ENCODE measurements at regions of chr15 and their contacts with region 1.

Region 1: DNA sequence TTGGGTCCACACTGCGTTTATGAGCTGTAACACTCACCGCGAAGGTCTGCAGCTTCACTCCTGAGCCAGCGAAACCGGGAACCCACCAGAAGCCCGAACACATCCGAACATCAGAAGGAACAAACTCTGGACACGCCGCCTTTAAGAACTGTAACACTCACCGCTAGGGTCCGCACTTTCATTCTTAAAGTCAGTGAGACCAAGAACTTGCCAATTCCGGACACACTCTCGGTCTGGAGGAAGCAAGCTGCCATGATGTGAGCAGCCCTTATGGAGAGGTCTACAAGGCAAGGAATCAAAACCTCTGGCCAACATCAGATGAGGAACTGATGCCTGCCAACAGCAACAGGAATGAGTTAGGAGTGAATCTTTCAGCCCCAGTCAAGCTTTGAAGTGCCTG is 62.9 kb downstream of the SLC28A2 start:
- DNase-seq: no peak
- ATAC-seq: peak in 1 of 2 donors; percentile 36

Region 2: DNA sequence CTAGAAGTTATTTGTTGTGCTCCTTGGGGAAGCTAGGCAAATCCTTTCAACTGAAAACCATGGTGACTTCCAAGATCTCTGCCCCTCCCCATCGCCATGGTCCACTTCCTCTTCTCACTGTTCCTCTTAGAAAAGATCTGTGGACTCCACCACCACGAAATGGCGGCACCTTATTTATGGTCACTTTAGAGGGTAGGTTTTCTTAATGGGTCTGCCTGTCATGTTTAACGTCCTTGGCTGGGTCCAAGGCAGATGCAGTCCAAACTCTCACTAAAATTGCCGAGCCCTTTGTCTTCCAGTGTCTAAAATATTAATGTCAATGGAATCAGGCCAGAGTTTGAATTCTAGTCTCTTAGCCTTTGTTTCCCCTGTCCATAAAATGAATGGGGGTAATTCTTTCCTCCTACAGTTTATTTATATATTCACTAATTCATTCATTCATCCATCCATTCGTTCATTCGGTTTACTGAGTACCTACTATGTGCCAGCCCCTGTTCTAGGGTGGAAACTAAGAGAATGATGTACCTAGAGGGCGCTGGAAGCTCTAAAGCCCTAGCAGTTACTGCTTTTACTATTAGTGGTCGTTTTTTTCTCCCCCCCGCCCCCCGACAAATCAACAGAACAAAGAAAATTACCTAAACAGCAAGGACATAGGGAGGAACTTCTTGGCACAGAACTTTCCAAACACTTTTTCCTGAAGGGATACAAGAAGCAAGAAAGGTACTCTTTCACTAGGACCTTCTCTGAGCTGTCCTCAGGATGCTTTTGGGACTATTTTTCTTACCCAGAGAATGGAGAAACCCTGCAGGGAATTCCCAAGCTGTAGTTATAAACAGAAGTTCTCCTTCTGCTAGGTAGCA is 604.5 kb before region 1 on chr15:
- intact Hi-C with region 1: no loop called
- DNase-seq: peak; percentile 47
- ATAC-seq: no peak

Region 3: DNA sequence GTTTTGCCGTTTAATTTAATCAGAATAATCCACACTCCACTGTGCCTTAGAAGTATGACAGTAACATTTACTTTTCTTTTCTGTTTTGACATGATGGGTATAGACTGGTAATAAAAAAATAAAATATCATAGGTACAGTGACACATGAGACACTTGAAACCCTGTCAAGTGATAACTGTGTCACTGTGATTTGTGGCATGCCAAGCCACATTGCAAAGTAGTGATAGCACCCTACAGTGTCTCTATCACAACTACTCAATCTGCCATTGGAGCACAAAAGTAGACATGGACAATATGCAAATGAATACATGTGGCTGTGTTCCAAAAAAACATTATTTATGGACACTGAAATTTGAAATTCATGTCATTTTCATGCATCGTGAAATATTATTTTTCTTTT is 40.9 kb after region 1 on chr15:
- intact Hi-C with region 1: loop called in 1 of 2 experiments (anchors 5 kb)
- DNase-seq: no peak
- ATAC-seq: peak in 1 of 2 donors; percentile 65

Measured in left cardiac atrium (tissue), 4 donors.